CD4-positive, alpha-beta memory T cell (primary cell): ENCODE measurements at regions of chr2 and their contacts with region 1.

Region 1: DNA sequence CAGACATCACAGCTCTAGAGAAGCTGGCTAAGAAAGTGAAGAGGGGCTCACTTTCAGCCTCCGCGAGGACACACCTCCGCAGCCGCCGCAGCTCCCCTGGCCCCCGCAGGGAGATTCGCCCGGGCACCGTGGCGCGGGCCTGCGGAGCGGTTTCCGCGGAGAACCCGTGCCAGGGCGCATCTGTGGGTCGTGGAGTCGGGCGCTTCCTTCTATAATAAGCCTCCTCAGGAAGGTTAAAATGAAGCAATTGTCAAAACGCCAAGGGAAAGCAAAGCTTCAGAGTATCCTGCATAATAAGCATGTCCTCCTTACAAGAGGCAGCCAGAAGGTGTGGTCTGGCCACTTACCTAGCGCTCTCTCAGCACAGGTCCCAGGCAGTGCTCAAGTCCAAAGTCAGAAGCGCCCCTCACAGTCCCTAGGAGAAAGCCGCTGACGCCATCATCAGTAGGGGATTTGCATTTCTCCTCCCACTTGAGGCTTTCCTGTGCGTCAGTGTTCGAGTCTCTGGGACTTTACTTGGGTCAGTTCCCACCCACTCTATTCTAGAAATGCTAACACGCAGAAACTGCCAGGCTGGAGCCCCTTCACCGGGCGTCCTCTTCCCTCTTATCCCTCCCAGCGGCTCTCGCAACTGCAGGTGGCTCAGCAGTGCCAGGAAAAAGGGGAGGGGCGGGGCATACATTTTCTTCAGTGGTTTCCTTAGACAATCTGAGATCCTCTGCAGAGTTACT is at the start of gene STAT4:
- DNase-seq: peak; percentile 87 to 95 (median 89)
- H3K4me3 ChIP-seq: peak within 1 kb of the TSS; percentile 89 to 92
- H3K4me3 Mint-ChIP-seq: peak within 1 kb of the TSS; percentile 81 to 98 (median 96)
- H3K27ac ChIP-seq: peak within 1 kb of the TSS; percentile 99
- H3K27ac Mint-ChIP-seq: peak within 1 kb of the TSS; percentile 93 to 100 (median 98)
- H3K4me1 ChIP-seq: peaks cover 42% of the 10 kb centered on the region
- H3K4me1 Mint-ChIP-seq: peaks cover 31 to 74% (median 48%) of the 10 kb centered on the region in 4 donors
- H3K27me3 ChIP-seq: no peaks in the 10 kb centered on the region
- H3K27me3 Mint-ChIP-seq: no peaks in the 10 kb centered on the region
- total RNA-seq, gene STAT4: 114 to 119 TPM

Region 2: GRCh38 chr2:190853531-190854383 is 297.0 kb before region 1 on chr2:
- CTCF ChIA-PET with region 1: interaction called, 13 read pairs
- POLR2A ChIA-PET with region 1: no interaction called
- intact Hi-C with region 1: loop called (anchors 5 kb)
- DNase-seq: no peak
- H3K4me3 ChIP-seq: no peak overlapping the region
- H3K4me3 Mint-ChIP-seq: no peak overlapping the region
- H3K27ac ChIP-seq: no peak overlapping the region
- H3K27ac Mint-ChIP-seq: no peak overlapping the region
- H3K4me1 ChIP-seq: no peaks in the 10 kb centered on the region
- H3K4me1 Mint-ChIP-seq: peaks cover 0 to 2% (median 0%) of the 10 kb centered on the region in 4 donors
- H3K27me3 ChIP-seq: no peaks in the 10 kb centered on the region
- H3K27me3 Mint-ChIP-seq: peaks cover 0 to 1% of the 10 kb centered on the region in 2 donors

Region 3: DNA sequence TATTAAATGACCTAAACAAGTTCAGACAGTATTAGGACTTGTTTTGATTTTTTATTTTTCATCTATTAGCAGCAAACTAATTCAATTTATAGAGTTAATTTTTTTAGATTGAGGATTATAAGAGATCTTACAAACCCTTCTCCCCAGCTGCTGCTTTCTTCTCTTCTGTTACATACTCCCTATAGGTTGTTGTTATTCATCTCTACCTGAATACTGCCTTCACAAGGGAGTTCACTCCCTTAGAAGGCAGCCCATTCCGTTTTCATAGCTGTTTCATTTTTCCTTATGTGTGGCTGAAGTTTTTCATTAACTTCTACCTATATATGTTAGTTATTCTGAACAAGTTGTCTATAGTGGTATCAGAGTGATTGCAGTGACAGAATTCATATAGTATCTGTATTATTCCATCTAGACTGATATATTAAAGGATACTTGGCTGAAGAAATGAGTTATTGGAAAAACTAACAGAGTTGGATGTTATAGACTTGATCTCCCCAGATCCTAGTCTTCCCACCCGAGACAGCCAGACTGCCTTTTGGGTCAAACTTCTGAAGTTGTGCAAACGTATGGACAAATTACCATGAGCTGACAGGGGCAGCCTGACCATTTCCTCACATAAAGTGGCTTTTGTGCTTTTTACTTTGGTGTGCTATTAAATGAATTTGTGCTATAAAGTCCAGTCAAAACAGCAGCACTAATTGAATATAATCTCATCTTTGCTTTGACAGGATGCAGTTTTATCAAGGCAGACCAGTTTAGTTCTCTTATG is 261.4 kb before region 1 on chr2:
- CTCF ChIA-PET with region 1: no interaction called
- POLR2A ChIA-PET with region 1: no interaction called
- intact Hi-C with region 1: no loop called
- DNase-seq: no peak
- H3K4me3 ChIP-seq: no peak overlapping the region
- H3K4me3 Mint-ChIP-seq: peak overlapping the region in 7 of 8 donors; percentile 7 to 75 (median 64)
- H3K27ac ChIP-seq: no peak overlapping the region
- H3K27ac Mint-ChIP-seq: peak overlapping the region; percentile 10 to 86 (median 65)
- H3K4me1 ChIP-seq: peaks cover 89% of the 10 kb centered on the region
- H3K4me1 Mint-ChIP-seq: peaks cover 48 to 83% (median 66%) of the 10 kb centered on the region in 4 donors
- H3K27me3 ChIP-seq: no peaks in the 10 kb centered on the region
- H3K27me3 Mint-ChIP-seq: no peaks in the 10 kb centered on the region

Region 4: GRCh38 chr2:191020221-191020741 is 130.5 kb before region 1 on chr2:
- CTCF ChIA-PET with region 1: interaction called, 7 read pairs
- POLR2A ChIA-PET with region 1: interaction called, 14 read pairs
- intact Hi-C with region 1: no loop called
- DNase-seq: peak; percentile 91 to 97 (median 94)
- H3K4me3 ChIP-seq: peak overlapping the region; percentile 50 to 55
- H3K4me3 Mint-ChIP-seq: no peak overlapping the region
- H3K27ac ChIP-seq: peak overlapping the region; percentile 86
- H3K27ac Mint-ChIP-seq: no peak overlapping the region
- H3K4me1 ChIP-seq: peaks cover 76% of the 10 kb centered on the region
- H3K4me1 Mint-ChIP-seq: peaks cover 17 to 35% (median 30%) of the 10 kb centered on the region in 4 donors
- H3K27me3 ChIP-seq: no peaks in the 10 kb centered on the region
- H3K27me3 Mint-ChIP-seq: no peaks in the 10 kb centered on the region

Region 5: DNA sequence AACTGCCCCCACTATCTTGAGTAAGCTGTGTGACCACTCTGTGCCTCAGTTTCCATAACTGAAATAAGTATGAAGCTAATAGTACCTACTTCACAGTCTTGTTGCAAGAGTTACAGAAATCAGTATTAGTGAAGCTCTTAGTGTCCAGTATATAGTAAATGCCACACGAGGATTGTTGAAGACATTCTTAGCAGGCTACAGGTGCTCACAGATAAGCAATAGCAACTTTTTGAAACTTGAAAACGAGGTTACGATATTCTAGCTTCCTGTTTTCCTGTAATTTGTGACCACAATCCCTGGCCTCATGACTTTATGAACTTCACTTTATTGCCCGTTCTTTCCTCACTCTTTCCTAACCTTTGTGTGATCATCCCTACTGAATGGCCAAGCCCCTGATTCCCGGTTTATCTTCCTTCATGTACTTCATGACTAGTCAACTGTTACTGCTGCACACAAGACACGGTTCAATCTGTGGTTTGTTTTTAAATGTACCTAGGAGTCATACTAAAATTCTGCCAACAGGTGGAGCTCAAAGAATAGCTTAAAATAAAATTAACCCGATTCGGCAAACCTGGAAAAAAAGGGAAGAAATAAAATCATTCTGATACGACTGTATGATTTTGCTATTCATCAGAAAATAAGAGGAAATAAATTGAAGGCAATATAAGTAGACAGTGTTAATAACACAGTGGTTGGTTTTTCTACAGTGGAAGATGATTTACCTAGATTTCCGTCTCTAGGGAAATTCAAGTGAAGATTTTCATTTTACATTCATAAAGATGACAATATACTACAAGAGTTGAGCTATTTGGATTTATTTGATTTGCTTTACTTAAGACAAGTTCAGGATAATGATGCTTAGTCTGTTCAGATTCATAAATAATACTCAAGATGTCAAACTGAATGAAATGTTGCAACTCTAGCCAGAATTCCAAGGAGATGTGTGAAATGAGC is 98.7 kb before region 1 on chr2:
- CTCF ChIA-PET with region 1: interaction called, 567 read pairs
- POLR2A ChIA-PET with region 1: interaction called, 70 read pairs
- intact Hi-C with region 1: loop called (anchors 1 kb)
- DNase-seq: peak in 4 of 5 donors; percentile 52 to 66 (median 62)
- H3K4me3 ChIP-seq: no peak overlapping the region
- H3K4me3 Mint-ChIP-seq: no peak overlapping the region
- H3K27ac ChIP-seq: no peak overlapping the region
- H3K27ac Mint-ChIP-seq: no peak overlapping the region
- H3K4me1 ChIP-seq: peaks cover 28% of the 10 kb centered on the region
- H3K4me1 Mint-ChIP-seq: peaks cover 15 to 23% (median 20%) of the 10 kb centered on the region in 4 donors
- H3K27me3 ChIP-seq: no peaks in the 10 kb centered on the region
- H3K27me3 Mint-ChIP-seq: no peaks in the 10 kb centered on the region

Region 6: DNA sequence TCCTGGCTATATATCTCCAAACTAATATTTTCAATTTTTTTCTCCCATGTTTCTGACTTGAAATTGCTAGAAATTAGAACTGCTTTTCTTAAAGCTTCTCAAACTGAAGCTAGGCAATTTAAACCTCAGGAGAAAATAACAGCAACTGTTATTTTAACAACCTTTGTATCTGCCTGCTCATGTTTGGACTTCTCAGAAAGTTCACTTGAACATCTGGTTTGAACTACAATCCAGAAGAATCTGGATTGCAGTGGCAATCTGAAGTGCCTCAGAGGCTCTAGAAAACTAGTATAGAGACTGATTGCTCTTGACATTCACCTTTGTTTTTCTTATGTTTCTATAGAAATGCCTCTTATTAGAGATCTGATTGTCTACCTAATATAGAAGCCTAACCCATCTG is 64.1 kb before region 1 on chr2:
- CTCF ChIA-PET with region 1: interaction called, 10 read pairs
- POLR2A ChIA-PET with region 1: interaction called, 3 read pairs
- intact Hi-C with region 1: no loop called
- DNase-seq: no peak
- H3K4me3 ChIP-seq: no peak overlapping the region
- H3K4me3 Mint-ChIP-seq: peak overlapping the region in 1 of 8 donors; percentile 5
- H3K27ac ChIP-seq: no peak overlapping the region
- H3K27ac Mint-ChIP-seq: no peak overlapping the region
- H3K4me1 ChIP-seq: peaks cover 16% of the 10 kb centered on the region
- H3K4me1 Mint-ChIP-seq: peaks cover 19 to 41% (median 33%) of the 10 kb centered on the region in 4 donors
- H3K27me3 ChIP-seq: no peaks in the 10 kb centered on the region
- H3K27me3 Mint-ChIP-seq: no peaks in the 10 kb centered on the region

Region 7: GRCh38 chr2:191128172-191128910 is 22.4 kb before region 1 on chr2:
- CTCF ChIA-PET with region 1: interaction called, 31 read pairs
- POLR2A ChIA-PET with region 1: interaction called, 27 read pairs
- intact Hi-C with region 1: loop called (anchors 1 kb)
- DNase-seq: peak in 1 of 5 donors; percentile 37
- H3K4me3 ChIP-seq: no peak overlapping the region
- H3K4me3 Mint-ChIP-seq: peak overlapping the region in 7 of 8 donors; percentile 38 to 68 (median 59)
- H3K27ac ChIP-seq: peak overlapping the region; percentile 14
- H3K27ac Mint-ChIP-seq: peak overlapping the region; percentile 60 to 92 (median 88)
- H3K4me1 ChIP-seq: peaks cover 45% of the 10 kb centered on the region
- H3K4me1 Mint-ChIP-seq: peaks cover 45 to 71% (median 60%) of the 10 kb centered on the region in 4 donors
- H3K27me3 ChIP-seq: no peaks in the 10 kb centered on the region
- H3K27me3 Mint-ChIP-seq: no peaks in the 10 kb centered on the region